Head of caudate nucleus (tissue), 42 donors: ENCODE measurements at regions of chr4 and their contacts with region 1.

Region 1: GRCh38 chr4:41204400-41204978 is 9.9 kb downstream of the APBB2 start:
- DNase-seq: peak in 1 of 42 donors; percentile 26

Region 2: GRCh38 chr4:41143311-41144039 is 61.0 kb before region 1 on chr4:
- intact Hi-C with region 1: loop called (anchors 10 kb)
- DNase-seq: no peak

Region 3: DNA sequence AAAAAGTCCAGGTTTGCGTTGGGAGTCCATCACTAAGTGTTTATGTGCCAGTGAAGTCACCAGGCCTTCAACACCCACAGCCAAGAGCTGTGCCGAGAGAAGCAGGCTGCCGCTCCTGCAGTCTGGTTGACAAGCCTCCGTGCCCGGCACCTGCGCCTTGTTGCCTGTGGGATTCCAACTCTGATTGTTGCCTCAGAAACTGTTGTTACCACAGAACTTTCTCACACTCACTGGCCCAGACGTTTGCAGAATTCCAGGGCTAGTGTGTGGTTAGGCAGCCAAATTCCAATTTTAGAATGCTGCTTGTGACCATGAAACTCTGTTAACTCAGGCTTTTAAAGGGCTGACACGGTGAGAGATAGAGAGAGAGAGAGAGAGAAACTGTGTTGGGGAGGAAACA is 214.0 kb after region 1 on chr4:
- intact Hi-C with region 1: no loop called
- DNase-seq: peak in 41 of 42 donors; percentile 14 to 76 (median 40)